Activated CD8-positive, alpha-beta T cell treated with anti-CD3 and anti-CD28 coated beads, Interleukin-2, amount 10 ng/mL, durations not matched to agents 7 days and 5 days (primary cell): ENCODE measurements at regions of chr1 and their contacts with region 1.

Region 1: GRCh38 chr1:145927063-145927886 is at the start of gene RBM8A:
- DNase-seq: peak; percentile 98
- ATAC-seq: peak; percentile 98
- H3K4me3 Mint-ChIP-seq: no peak within 1 kb of the TSS
- H3K27ac Mint-ChIP-seq: peak within 1 kb of the TSS; percentile 79
- H3K4me1 Mint-ChIP-seq: peaks cover 25% of the 10 kb centered on the region
- H3K27me3 Mint-ChIP-seq: no peaks in the 10 kb centered on the region
- total RNA-seq, gene RBM8A: 202 to 204 TPM

Region 2: DNA sequence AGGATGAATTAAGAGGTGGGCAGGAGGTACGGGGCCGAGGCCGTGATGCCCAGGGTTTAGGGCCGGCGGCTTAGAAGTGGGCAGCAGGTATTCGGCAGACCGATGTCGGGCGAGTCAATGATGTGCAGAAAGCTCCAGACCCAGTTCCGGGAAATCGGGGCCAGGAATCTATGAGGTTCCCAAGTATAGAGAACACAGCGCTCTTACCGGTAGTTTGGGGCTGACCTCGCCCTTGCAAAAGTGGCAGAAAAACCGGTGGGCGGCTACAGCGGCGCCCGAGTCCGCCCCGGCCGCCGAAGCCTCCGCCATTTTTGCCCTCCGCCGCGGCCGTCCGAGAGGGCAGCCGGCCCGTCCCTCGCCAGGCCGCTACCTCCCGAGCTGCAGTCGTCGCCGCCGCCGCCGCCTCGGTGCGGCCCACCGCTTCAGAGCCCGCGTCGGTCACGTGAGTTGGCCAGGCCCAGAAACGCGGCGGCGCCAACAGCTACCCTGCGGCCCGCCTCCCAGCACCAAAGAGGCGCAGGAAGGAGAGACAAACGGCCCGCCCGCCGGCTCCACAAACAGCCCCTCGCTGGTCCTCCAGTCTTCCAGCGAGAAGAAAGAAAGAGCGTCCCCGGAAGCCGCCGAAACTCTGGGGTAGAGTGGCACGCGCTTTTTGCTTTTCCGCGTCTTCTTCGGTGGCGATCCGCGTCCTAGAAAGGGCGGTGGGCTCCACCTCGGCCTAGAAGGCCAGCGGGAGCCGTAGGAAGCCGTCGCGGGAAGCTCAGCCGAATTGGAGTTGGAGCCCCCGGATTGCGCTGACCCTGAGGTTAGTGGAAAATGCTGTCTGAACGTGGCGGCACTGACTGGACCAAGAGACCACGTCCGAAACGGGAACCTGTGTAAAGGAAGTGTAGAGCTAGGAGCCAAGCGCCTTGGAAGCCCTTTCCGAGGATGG is 103.4 kb before region 1 on chr1 and contains the starts of genes POLR3C and RNF115:
- CTCF ChIA-PET with region 1: interaction called, 5 read pairs
- POLR2A ChIA-PET with region 1: interaction called, 11 read pairs
- DNase-seq: peak; percentile 94
- ATAC-seq: peak; percentile 95
- H3K4me3 Mint-ChIP-seq: peak within 1 kb of the TSS; percentile 97
- H3K27ac Mint-ChIP-seq: peak within 1 kb of the TSS; percentile 94
- H3K4me1 Mint-ChIP-seq: peaks cover 33% of the 10 kb centered on the region
- H3K27me3 Mint-ChIP-seq: no peaks in the 10 kb centered on the region
- total RNA-seq, gene POLR3C: 29.7 to 31.5 TPM
- total RNA-seq, gene RNF115: 15.1 to 15.5 TPM

Region 3: GRCh38 chr1:145837656-145838055 is 89.6 kb before region 1 on chr1:
- CTCF ChIA-PET with region 1: no interaction called
- POLR2A ChIA-PET with region 1: no interaction called
- DNase-seq: no peak
- ATAC-seq: no peak
- H3K4me3 Mint-ChIP-seq: no peak overlapping the region
- H3K27ac Mint-ChIP-seq: no peak overlapping the region
- H3K4me1 Mint-ChIP-seq: no peaks in the 10 kb centered on the region
- H3K27me3 Mint-ChIP-seq: no peaks in the 10 kb centered on the region

Region 4: DNA sequence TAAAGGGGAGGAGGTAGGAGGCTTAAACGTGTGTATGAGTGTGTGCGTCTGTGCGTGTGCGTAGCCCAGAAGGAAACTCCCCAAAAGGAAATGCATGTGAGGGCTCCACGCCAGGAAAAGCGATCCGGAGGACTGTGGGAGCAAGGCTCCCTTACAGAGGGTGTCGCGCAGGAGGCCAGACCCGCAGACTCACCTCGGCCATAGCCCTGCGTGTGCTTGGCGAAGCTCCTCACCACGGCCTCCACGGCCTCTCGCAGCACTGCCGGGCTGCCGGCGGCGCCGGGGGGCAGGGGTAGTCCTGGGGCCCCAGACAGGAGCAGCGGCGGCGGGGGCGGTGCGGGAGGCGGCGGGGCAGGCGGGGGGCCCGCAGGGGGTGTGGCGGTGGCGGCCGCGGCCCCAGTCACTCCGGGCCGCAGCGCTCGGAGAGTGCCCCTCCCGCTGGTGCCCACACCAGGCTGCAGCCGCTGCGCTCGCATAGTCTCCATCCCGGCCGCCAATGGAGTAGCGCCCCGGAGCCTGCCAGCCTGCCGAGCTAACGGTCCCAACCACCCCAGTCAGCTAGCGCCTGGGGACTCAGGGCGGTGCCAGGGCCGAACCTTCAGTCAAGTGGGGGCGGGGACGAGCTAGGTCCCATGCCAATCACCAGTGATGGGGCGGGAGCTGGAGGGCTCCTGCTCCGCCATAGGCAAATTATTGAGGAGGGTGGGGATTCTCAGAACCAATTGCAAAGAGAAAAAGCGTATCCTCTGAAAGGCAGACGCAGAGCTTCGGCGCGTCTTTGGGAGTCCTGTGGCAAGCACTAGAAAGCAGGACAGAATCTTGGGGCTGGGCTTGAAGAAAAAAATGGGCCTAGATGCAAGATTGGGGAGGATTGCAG is 30.4 kb after region 1 on chr1 and contains the start of gene LIX1L:
- CTCF ChIA-PET with region 1: interaction called, 46 read pairs
- POLR2A ChIA-PET with region 1: interaction called, 42 read pairs
- DNase-seq: peak; percentile 98
- ATAC-seq: peak; percentile 93
- H3K4me3 Mint-ChIP-seq: peak within 1 kb of the TSS; percentile 85
- H3K27ac Mint-ChIP-seq: peak within 1 kb of the TSS; percentile 84
- H3K4me1 Mint-ChIP-seq: peaks cover 62% of the 10 kb centered on the region
- H3K27me3 Mint-ChIP-seq: no peaks in the 10 kb centered on the region
- total RNA-seq, gene LIX1L: 45.8 to 48.4 TPM

Region 5: DNA sequence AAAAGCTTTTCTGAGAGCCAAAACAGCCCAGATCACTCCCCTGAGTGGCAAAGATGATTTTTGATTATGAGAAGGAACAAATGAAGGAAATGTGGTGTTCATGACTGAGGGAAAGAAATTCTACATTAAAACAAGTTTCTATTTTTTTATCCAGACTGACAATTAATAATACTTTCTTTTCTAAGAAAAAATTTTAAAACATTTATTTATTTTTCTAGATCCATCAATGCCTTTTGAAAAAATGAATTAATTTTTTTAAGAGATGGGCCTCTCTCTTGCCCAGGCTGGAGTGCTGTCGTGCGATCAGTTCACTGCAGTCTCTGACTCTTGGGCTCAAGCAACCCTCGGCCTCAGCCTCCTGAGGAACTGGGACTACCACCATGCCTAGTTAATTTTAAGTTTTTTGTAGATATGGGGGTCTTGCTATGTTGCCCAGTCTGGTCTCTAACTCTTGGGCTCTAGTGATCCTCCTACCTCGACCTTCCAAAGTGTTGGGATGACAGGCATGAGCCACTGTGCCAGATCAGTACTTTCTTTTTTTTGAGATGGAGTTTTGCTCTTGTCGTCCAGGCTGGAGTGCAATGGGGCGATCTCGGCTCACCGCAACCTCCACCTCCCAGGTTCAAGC is 80.3 kb after region 1 on chr1:
- CTCF ChIA-PET with region 1: interaction called, 4 read pairs
- POLR2A ChIA-PET with region 1: interaction called, 12 read pairs
- DNase-seq: no peak
- ATAC-seq: no peak
- H3K4me3 Mint-ChIP-seq: peak overlapping the region; percentile 69
- H3K27ac Mint-ChIP-seq: peak overlapping the region; percentile 91
- H3K4me1 Mint-ChIP-seq: peaks cover 39% of the 10 kb centered on the region
- H3K27me3 Mint-ChIP-seq: no peaks in the 10 kb centered on the region

Region 6: DNA sequence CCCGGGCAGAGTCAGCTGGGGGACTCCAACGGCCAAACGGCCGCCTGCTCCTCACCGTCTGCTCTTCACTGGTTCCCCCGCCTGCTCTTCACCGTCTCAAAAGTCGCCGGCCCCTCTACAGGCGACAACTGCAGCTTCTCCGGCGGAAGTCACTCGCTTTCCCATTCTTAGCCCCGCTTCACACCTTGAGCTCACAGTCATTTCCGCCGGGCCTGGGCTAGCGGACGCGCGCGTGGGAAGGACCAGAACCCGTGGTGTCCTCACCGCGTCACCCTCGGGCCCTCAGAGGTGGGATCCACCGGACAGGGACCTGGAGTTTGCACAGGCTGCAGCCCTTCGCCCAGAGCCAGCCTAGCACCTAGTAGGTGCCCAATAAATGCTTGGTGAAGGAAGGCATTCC is 122.2 kb after region 1 on chr1:
- CTCF ChIA-PET with region 1: no interaction called
- POLR2A ChIA-PET with region 1: interaction called, 10 read pairs
- DNase-seq: no peak
- ATAC-seq: no peak
- H3K4me3 Mint-ChIP-seq: no peak overlapping the region
- H3K27ac Mint-ChIP-seq: peak overlapping the region; percentile 39
- H3K4me1 Mint-ChIP-seq: peaks cover 33% of the 10 kb centered on the region
- H3K27me3 Mint-ChIP-seq: peaks cover 5% of the 10 kb centered on the region